ENCODE measurements at regions of chr7 and their contacts with region 1.

Region 1: GRCh38 chr7:82605247-82605872 is 161.8 kb upstream of the CACNA2D1 start:
- DNase-seq: no peak
- ATAC-seq: peak; percentile 57; the same call in 1 of the 2 replicates
- H3K4me3 Mint-ChIP-seq: no peak overlapping the region
- H3K27ac Mint-ChIP-seq: no peak overlapping the region
- H3K4me1 Mint-ChIP-seq: peaks cover 7% of the 10 kb centered on the region
- H3K27me3 Mint-ChIP-seq: no peaks in the 10 kb centered on the region
- CTCF ChIP-seq: peak; percentile 73

Region 2: GRCh38 chr7:82044497-82045080 is 560.8 kb before region 1 on chr7:
- CTCF ChIA-PET with region 1: interaction called, 10 read pairs
- POLR2A ChIA-PET with region 1: no interaction called
- DNase-seq: no peak
- ATAC-seq: no peak
- H3K4me3 Mint-ChIP-seq: no peak overlapping the region
- H3K27ac Mint-ChIP-seq: no peak overlapping the region
- H3K4me1 Mint-ChIP-seq: peaks cover 12% of the 10 kb centered on the region
- H3K27me3 Mint-ChIP-seq: no peaks in the 10 kb centered on the region
- CTCF ChIP-seq: peak; percentile 68